Psoas muscle (tissue), 8 donors: ENCODE measurements at regions of chr2 and their contacts with region 1.

Region 1: DNA sequence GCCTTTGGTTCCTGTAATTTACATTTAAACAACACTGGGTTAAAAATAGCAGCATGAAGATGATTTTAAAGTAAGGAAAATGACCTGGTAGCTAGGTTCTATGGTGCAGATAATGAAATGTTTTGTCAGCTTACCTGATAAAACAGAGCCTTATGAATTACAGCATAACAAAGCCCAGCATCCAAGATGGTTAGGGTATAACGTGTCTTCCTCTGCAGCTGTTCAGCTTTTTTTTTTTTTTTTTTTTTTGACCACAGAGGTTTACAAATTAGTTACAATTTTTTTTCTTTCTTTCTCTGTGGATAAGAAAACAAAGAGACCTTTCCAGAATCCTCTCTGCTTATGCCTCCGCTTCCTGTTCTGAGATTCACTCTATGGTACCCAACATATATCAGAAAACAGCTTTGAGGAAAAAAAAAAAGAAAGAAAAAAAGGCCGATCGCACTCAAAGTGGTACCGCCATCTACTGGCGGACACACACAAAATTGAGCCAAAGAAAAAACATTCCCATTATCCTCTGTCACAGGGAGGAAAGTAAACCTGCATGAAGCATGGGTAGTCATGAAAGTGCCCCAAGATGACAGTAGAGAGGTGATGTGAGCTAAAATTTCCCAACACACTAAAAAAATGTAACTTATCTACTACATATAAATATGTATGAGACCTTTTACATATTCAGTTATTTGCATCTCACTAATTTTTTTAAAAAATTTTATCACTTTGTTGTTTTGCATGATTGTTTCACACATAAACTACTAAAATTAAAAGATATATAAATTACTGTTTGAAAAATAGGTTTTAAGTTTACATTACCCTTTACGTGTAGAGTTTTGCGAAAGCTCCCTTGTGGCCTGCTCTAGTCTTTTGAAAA is at the start of gene SCN3A:
- DNase-seq: no peak
- ATAC-seq: peak in 3 of 4 donors; percentile 44 to 68 (median 44)
- H3K4me3 ChIP-seq: peak within 1 kb of the TSS; percentile 53
- H3K27ac ChIP-seq: no peak within 1 kb of the TSS
- H3K4me1 ChIP-seq: no peaks in the 10 kb centered on the region
- H3K27me3 ChIP-seq: no peaks in the 10 kb centered on the region
- CTCF ChIP-seq: peak; percentile 66
- total RNA-seq, gene SCN3A: 0.10 to 1.7 (median 0.66) TPM

Region 2: DNA sequence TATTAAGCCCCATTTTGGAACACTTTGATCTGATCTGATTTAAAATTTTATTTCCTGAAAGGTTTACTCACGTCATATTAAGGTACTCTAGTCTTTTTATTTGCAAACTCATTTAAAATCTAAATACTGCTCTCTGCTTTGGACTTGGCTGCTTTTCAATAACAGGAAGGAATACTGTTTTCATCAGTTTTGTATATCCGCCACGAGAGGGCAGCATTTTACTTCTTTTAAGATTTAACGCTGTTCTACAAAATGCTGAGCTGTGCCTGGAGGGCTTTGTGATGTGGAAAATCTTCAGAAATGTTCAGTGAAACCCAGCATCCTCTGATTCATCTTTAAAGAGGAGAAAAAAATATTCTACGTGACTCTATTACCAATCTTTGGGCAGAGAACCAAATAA is 211.1 kb before region 1 on chr2:
- intact Hi-C with region 1: loop called in 1 of 2 experiments (anchors 5 kb)
- DNase-seq: no peak
- ATAC-seq: peak in 2 of 4 donors; percentile 53 to 79
- H3K4me3 ChIP-seq: no peak overlapping the region
- H3K27ac ChIP-seq: no peak overlapping the region
- H3K4me1 ChIP-seq: no peaks in the 10 kb centered on the region
- H3K27me3 ChIP-seq: no peaks in the 10 kb centered on the region
- CTCF ChIP-seq: peak; percentile 64

Region 3: DNA sequence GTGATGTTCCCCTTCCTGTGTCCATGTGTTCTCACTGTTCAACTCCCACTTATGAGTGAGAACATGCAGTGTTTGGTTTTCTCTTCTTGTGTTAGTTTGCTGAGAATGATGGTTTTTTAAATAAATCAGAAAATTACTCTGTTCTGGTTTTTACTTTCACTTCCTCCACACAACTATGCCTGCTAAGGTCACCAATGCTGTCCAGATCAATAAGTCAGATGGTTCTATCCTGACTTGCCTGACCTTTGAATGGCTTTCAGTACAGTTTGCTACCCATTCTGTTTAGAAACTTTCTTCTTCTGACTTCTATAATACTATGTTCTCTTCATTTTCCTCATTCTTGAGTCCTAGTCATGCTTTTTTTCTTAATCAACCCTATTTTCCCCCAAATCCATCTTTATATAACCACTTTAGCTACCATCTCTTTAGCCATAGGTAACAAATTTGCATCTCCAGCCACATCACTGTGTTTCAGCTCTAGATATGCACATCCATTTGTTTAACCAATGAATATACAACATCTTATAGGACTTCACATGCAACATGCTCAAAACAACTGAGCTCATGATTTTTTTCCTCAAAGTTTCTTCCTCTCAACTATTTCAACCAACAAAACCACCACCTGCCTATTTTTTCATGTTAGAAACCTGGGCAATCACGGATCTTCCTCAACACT is 189.8 kb before region 1 on chr2:
- intact Hi-C with region 1: loop called in 1 of 2 experiments (anchors 5 kb)
- DNase-seq: no peak
- ATAC-seq: no peak
- H3K4me3 ChIP-seq: no peak overlapping the region
- H3K27ac ChIP-seq: no peak overlapping the region
- H3K4me1 ChIP-seq: no peaks in the 10 kb centered on the region
- H3K27me3 ChIP-seq: peaks cover 0 to 4% (median 2%) of the 10 kb centered on the region in 3 donors
- CTCF ChIP-seq: no peak